ENCODE measurements at regions of chr16 and their contacts with region 1.

Region 1: DNA sequence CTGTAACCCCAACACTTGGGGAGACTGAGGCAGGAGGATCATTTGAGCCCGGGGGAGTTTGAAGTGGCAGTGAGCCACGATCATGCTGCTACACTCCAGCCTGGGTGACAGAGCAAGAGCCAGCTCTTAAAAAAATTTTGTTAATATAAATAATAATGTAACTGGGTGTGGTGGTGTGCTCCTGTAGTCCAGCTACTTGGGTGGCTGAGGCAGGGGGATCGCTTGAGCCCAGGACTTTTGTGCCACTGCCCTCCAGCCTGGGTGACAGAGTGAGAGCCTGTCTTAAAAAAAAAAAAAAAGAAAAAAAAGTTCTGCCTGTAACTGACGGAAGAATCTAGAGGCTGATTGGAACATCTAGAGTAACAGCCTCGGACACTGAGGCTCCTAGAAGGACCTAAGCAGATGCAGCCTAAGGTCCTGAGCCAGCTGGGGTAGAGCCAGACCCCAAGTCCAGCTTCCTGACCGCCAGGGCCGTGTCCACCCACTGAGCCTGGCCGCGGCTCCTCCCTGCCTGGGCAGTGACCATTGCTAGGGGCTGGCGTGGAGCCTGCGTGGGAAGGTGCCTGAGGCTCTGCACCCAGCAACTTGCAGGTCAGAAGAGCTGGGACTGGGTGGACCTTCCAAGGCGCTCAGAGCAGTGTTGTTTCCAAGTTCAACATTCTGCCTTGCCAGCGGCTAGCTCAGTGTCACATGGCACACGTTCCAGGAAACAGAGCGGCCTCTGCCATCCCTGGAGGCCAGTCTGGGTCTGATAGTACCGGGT is 209.4 kb upstream of the CIBAR2 start:
- DNase-seq: peak; percentile 98 to 99
- ATAC-seq: peak; percentile 90 to 91
- H3K4me3 ChIP-seq: peak overlapping the region in 1 of 4 donors; percentile 22
- H3K27ac ChIP-seq: peak overlapping the region; percentile 86 to 93 (median 90)
- H3K4me1 ChIP-seq: peaks cover 34 to 36% of the 10 kb centered on the region in 2 donors
- H3K27me3 ChIP-seq: no peaks in the 10 kb centered on the region
- CTCF ChIP-seq: no peak
- POLR2A ChIP-seq: peak in 1 of 2 donors; percentile 12

Region 2: DNA sequence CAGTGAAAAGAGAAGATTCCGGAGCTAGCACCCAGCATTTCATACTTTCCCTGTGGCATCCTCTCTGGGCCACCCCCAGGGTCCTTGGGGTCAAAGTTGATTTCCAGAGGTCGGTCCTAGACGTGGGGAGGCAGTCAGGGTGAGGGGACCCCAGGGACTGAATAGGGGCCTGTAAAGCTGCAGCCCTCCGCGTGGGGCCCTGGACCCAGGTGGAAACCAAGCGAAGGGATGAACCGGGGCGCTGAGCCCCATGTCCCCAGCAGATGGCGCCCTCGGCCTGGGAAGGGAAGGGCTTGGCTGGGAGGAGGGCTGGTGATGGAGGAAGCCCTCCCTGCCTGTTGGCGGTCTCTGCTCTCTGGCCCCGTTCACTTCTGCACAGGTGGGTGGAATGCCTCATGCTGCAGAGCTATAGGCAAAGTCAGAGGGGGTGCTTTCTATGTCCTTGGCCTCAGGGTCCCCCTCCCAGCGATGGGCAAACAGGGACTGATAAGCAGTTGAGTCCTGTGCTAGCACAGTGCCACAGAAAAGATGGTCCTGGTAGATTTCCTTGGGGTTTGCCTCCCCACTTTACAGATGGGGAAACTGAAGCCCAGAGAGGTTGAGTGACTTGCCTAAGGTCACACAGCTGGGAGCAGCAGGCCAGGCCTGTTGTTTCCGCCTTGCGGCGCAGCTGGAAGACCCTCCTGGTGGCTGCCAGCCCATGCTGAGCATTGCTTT is 46.0 kb before region 1 on chr16:
- in situ Hi-C with region 1: no loop called
- intact Hi-C with region 1: loop called (anchors 2 kb)
- DNase-seq: peak; percentile 50 to 57
- ATAC-seq: peak; percentile 51 to 68
- H3K4me3 ChIP-seq: no peak overlapping the region
- H3K27ac ChIP-seq: no peak overlapping the region
- H3K4me1 ChIP-seq: peaks cover 9 to 10% of the 10 kb centered on the region in 2 donors
- H3K27me3 ChIP-seq: no peaks in the 10 kb centered on the region
- CTCF ChIP-seq: peak; percentile 85 to 95 (median 91)
- POLR2A ChIP-seq: no peak

Region 3: DNA sequence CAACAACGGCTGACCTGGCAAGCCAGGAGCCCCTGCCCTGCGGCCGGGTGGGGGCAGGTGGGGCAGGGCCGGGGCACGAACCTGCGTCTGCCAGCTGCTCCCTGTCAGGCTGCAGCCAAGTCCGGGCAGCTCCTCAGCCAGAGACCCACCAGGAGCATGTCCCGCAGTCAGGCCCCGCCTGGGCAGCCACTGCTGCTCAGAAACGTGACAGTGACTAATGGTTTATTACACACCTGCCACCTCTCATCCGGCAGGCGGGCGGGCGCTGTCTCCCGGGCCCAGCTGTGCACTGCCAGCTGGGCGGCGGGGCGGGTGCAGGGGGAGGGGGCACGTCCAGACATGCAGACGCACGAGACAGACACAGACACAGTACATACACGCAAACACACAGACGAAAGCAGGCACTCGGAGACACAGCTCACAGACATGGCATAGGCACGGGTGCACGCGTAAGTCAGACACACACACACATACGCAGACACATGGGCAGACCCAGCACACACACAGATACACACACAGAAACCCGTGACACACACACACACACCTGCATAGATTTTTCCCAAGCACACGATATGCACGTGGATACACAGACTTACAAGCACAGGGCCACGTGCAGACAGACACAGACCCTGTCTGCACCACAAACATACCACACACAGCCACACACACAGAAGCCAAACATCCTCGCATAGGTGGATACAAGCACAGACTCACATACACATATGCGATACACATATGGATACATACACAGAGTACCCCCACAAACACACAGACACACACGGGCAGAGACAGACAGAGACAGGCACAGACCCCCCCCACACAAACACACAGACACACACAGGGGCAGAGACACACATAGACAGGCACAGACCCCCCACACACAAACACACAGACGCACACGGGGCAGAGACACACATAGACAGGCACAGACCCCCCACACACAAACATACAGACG is 38.9 kb after region 1 on chr16:
- in situ Hi-C with region 1: no loop called
- intact Hi-C with region 1: loop called (anchors 2 kb)
- DNase-seq: peak; percentile 82 to 90
- ATAC-seq: peak; percentile 85
- H3K4me3 ChIP-seq: no peak overlapping the region
- H3K27ac ChIP-seq: peak overlapping the region; percentile 55 to 68 (median 66)
- H3K4me1 ChIP-seq: peaks cover 9 to 12% of the 10 kb centered on the region in 2 donors
- H3K27me3 ChIP-seq: no peaks in the 10 kb centered on the region
- CTCF ChIP-seq: no peak
- POLR2A ChIP-seq: peak in 1 of 2 donors; percentile 43

Region 4: GRCh38 chr16:85610508-85611332 is 289.0 kb after region 1 on chr16:
- in situ Hi-C with region 1: no loop called
- intact Hi-C with region 1: loop called (anchors 5 kb)
- DNase-seq: peak; percentile 74 to 83
- ATAC-seq: peak; percentile 24 to 31
- H3K4me3 ChIP-seq: peak overlapping the region; percentile 66 to 96 (median 81)
- H3K27ac ChIP-seq: peak overlapping the region; percentile 91 to 99 (median 95)
- H3K4me1 ChIP-seq: peaks cover 34 to 35% of the 10 kb centered on the region in 2 donors
- H3K27me3 ChIP-seq: no peaks in the 10 kb centered on the region
- CTCF ChIP-seq: peak; percentile 99 to 100 (median 99)
- POLR2A ChIP-seq: no peak